Activated naive CD4-positive, alpha-beta T cell treated with anti-CD3 and anti-CD28 coated beads for 36 hours (primary cell): ENCODE measurements at regions of chr19 and their contacts with region 1.

Region 1: DNA sequence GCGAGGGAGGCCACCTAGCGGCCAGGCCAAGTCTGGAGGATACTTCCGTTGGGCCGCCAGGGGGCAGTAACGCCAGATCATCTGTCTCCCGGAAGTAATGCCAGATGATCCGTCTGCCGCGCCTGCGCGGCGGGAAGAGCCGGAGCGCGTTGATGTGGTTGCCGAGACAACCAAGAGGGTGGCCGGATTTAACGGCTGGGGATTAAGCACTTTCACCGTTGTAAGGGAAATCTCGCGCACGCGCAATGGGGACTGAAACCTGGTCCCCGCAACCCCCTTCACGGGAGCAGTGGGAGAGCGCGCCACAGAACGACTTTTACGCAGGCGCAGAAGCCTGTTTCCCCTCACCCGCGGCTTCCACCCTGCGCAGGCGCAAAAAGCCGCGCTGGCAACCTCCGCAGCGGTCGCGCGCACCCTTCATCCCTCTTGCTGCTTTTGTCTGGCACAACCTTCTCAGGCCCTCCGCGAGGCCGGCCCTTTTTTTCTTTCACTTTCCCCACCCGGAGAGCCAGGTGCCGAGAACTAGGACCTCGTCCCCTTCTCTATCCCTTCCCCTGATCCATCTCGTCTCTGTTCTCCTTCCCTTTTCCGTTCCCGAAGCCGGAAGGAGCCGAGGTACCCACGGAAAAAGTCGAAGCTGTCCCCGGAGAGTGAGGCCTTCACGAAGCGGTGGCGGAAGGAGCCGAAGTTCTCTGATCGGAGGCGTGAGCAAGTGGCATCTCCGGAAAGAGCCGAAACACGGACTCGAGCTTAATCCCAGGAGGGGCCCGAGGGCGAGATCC is 886 bp upstream of the U2AF2 start:
- DNase-seq: peak; percentile 100
- H3K4me3 Mint-ChIP-seq: peak overlapping the region; percentile 88
- H3K27ac Mint-ChIP-seq: peak overlapping the region; percentile 98
- H3K4me1 Mint-ChIP-seq: peaks cover 43% of the 10 kb centered on the region
- H3K27me3 Mint-ChIP-seq: no peaks in the 10 kb centered on the region

Region 2: DNA sequence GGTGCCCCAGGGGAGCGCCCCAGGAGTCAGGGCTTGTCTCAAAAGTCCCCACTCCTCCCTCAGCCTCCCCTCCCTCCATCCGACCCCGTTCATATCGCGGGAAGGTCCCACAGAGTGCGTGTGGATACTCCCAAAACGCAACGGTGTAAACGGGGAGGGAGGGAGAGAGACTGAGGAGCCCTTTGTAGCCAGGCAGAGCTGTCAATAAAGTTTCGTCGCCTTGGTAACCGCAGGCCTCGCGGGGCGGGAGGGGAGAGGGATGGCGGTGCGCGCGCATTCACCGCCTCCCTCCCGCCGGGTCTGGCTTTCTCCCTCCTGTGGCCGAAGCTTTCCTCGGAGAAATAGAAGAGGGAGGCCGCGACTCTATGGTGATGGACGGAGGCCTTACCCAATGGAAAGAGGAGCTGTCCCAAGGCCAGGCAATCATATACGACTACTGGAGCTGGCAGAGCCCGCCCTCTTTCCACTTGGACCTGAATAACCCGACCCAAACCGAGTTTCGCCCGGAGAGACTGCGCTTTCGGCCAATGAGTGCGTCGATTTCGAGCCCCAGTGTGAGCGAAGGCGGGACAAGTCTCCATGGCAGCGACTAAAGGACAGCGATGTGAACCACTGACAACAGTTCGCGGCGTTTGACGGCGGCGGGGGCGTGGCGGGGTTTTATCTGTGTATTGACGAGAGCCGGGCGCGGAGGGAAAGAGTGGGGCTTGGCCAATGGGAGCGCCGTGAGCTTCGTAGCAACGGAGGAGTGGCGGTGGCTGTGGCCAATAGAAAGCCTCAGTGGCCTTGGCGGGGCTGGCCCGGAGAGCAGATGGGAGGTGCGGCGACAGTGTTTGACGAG is 314.7 kb before region 1 on chr19 and contains the start of gene KMT5C:
- CTCF ChIA-PET with region 1: no interaction called
- intact Hi-C with region 1: loop called (anchors 5 kb)
- DNase-seq: peak; percentile 100
- H3K4me3 Mint-ChIP-seq: peak within 1 kb of the TSS; percentile 90
- H3K27ac Mint-ChIP-seq: peak within 1 kb of the TSS; percentile 92
- H3K4me1 Mint-ChIP-seq: peaks cover 12% of the 10 kb centered on the region
- H3K27me3 Mint-ChIP-seq: no peaks in the 10 kb centered on the region
- total RNA-seq, gene KMT5C: 45.9 to 47.1 TPM

Region 3: GRCh38 chr19:55605207-55605636 is 48.7 kb before region 1 on chr19:
- CTCF ChIA-PET with region 1: no interaction called
- intact Hi-C with region 1: loop called (anchors 1 kb)
- DNase-seq: peak; percentile 100
- H3K4me3 Mint-ChIP-seq: peak overlapping the region; percentile 86
- H3K27ac Mint-ChIP-seq: peak overlapping the region; percentile 96
- H3K4me1 Mint-ChIP-seq: peaks cover 52% of the 10 kb centered on the region
- H3K27me3 Mint-ChIP-seq: no peaks in the 10 kb centered on the region

Region 4: DNA sequence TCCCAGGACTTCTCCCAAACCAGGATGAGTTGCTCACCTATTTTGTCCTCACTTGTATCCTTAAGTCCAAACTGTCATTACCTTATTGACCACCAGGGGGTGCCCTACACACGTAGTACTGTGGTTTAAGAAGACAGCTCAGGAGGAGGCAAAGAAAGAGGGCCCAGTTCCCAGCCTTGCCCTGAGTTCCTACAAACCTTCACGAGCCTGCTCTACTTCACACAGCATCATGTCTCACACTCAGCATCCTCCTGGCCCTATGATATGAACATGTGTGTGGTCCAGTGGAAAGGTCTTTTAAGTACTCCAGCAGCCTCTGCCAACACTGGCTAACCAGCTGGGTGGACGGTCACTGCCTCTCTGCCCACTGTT is 21.5 kb before region 1 on chr19:
- CTCF ChIA-PET with region 1: interaction called, 9 read pairs
- intact Hi-C with region 1: loop called (anchors 1 kb)
- DNase-seq: peak; percentile 98
- H3K4me3 Mint-ChIP-seq: no peak overlapping the region
- H3K27ac Mint-ChIP-seq: peak overlapping the region; percentile 60
- H3K4me1 Mint-ChIP-seq: peaks cover 36% of the 10 kb centered on the region
- H3K27me3 Mint-ChIP-seq: no peaks in the 10 kb centered on the region

Region 5: GRCh38 chr19:55674841-55675660 is 21.1 kb after region 1 on chr19 and contains the start of gene EPN1:
- CTCF ChIA-PET with region 1: interaction called, 10 read pairs
- intact Hi-C with region 1: loop called (anchors 1 kb)
- DNase-seq: peak; percentile 98
- H3K4me3 Mint-ChIP-seq: peak within 1 kb of the TSS; percentile 99
- H3K27ac Mint-ChIP-seq: peak within 1 kb of the TSS; percentile 91
- H3K4me1 Mint-ChIP-seq: peaks cover 68% of the 10 kb centered on the region
- H3K27me3 Mint-ChIP-seq: no peaks in the 10 kb centered on the region
- total RNA-seq, gene EPN1: 23.4 TPM

Region 6: DNA sequence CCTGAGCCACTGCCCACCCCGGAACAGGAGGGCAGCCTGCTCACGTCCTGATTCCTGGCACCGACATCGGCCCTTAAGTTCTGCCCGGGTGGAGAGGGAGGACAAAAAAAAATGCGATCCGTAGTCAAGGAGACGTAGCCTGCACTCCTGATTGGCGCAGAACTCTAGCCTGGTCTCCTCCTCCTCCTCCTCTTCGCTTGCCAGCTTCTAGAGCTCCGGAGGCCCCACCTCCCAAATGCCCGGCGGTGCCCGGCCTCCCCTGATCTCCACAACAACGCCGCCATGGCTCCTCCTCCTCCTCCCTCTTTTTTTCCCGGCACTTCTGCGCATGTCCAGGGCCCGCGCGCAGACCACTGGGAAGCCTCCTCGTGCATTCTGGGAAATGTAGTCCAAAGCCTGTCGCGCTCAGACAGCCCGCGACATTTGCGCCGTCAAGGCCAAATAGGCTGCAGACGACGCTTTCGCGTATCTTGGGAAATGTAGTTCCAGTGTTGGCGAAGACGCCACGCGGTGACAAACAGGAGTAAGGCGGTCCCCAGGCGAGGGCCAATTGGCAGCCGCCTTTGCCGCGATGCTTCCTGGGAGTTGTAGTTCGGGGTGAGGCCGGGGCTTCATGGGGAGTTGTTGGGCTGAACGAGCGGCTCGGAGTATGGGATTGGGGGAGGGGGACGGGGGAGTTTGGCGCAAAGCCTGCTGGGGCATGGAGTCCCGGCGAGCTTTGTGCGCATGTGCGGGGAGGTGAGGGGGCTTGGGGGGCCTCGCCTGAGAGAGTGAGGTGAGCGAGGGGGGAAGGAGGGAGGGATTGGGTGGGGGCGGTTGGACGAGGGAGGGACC is 486.9 kb after region 1 on chr19 and contains the start of gene ZNF444:
- CTCF ChIA-PET with region 1: no interaction called
- intact Hi-C with region 1: loop called (anchors 2 kb)
- DNase-seq: peak; percentile 99
- H3K4me3 Mint-ChIP-seq: peak within 1 kb of the TSS; percentile 97
- H3K27ac Mint-ChIP-seq: peak within 1 kb of the TSS; percentile 95
- H3K4me1 Mint-ChIP-seq: peaks cover 35% of the 10 kb centered on the region
- H3K27me3 Mint-ChIP-seq: no peaks in the 10 kb centered on the region
- total RNA-seq, gene ZNF444: 17.8 to 21.4 TPM